ENCODE measurements at regions of chr16 and their contacts with region 1.

Region 1: GRCh38 chr16:82603784-82604411 is 22.9 kb upstream of the CDH13 start:
- DNase-seq: peak; percentile 64
- H3K4me3 Mint-ChIP-seq: no peak overlapping the region
- H3K27ac Mint-ChIP-seq: no peak overlapping the region
- H3K4me1 Mint-ChIP-seq: no peaks in the 10 kb centered on the region
- H3K27me3 Mint-ChIP-seq: no peaks in the 10 kb centered on the region
- CTCF ChIP-seq: peak; percentile 59

Region 2: DNA sequence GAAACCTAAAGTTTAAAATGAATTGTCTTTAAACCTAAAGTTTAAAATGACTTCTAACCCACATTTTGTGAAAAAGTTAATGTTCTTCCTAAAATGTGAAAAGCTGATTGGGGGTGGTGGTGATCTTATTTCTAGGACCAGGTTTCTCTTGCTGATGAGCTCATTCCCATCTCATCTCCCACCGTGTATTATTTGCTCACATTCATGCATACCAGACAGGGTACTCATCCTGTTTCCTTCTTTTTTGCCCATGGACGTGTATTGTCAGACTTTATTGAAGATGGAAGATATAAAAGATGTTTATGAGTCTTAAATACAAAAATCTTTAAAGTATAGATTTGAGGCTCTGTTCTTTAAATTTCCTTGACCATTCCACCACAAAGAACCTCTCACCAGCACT is 363.8 kb before region 1 on chr16:
- CTCF ChIA-PET with region 1: no interaction called
- POLR2A ChIA-PET with region 1: no interaction called
- intact Hi-C with region 1: no loop called
- DNase-seq: no peak
- H3K4me3 Mint-ChIP-seq: no peak overlapping the region
- H3K27ac Mint-ChIP-seq: no peak overlapping the region
- H3K4me1 Mint-ChIP-seq: no peaks in the 10 kb centered on the region
- H3K27me3 Mint-ChIP-seq: peaks cover 76% of the 10 kb centered on the region
- CTCF ChIP-seq: no peak

Region 3: DNA sequence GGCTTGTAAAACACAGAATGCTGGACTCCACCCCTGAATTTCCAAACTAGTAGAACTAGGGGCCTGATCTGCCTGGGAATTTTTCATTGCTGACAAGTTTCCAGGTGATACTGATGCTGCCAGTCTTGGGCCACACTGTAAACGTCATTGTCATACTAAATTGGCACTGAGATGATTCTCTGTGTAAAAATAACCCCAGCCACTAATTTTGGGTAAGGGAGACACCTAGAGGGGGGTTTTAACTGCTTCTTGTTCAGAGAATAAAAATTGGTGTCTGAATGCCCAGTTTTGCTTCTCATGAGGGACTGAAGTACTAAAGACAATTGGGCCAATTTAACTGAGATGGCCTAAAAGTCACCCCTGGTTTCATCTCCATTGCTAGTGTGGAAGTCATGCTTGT is 17.9 kb after region 1 on chr16:
- CTCF ChIA-PET with region 1: interaction called, 31 read pairs
- POLR2A ChIA-PET with region 1: no interaction called
- intact Hi-C with region 1: no loop called
- DNase-seq: peak; percentile 25
- H3K4me3 Mint-ChIP-seq: no peak overlapping the region
- H3K27ac Mint-ChIP-seq: no peak overlapping the region
- H3K4me1 Mint-ChIP-seq: no peaks in the 10 kb centered on the region
- H3K27me3 Mint-ChIP-seq: no peaks in the 10 kb centered on the region
- CTCF ChIP-seq: no peak

Region 4: DNA sequence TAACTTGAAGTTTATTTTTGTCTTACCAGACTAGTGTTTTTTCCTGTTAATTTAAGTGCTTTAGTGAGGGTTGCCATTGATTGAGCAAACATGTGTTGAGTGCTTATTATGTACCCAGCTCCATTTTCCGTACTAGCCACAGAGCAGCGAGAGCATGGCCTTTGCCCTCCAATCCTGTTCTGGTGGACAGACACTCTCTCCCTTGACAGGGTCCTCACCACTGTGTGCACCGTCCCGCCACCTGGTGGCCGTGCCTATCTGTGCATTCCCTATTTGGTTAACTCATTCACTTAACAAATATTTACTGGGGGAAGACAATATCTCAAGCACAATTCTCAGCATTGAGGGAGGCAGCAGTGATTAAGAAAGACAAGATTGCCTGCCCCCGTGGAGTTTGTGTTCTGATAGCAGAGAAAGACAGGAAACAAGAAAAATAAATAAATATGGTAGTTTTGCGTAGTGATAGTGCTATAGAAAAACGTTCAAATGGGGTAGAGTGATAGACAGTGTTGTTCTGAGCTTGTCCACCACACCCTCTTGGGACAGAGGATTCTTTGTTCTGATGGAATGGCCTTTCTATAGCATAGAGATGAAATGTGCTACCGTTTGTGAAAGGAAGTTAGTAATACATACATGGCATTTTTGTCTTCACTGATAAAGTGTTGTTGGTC is 35.9 kb after region 1 on chr16:
- CTCF ChIA-PET with region 1: interaction called, 35 read pairs
- POLR2A ChIA-PET with region 1: interaction called, 3 read pairs
- intact Hi-C with region 1: loop called (anchors 1 kb)
- DNase-seq: peak; percentile 73
- H3K4me3 Mint-ChIP-seq: no peak overlapping the region
- H3K27ac Mint-ChIP-seq: no peak overlapping the region
- H3K4me1 Mint-ChIP-seq: peaks cover 36% of the 10 kb centered on the region
- H3K27me3 Mint-ChIP-seq: no peaks in the 10 kb centered on the region
- CTCF ChIP-seq: peak; percentile 82

Region 5: DNA sequence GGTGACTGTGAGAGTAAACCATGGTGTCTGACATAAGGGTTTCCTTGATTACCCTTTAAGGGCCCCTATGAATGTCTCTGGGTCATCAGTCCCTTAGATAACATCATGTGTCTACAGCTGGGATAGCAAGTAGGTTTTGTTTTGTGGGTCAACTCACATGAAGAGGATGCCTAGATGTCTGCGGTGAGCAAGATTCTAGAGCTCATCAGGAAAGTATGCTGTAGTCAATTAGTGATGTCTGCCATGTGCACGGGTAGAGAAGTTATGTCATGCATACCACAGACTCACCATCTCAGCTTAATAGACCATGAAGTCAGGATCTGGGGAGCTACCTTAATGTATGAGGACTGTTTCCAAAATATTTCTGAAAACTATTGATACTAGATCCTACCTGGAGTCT is 80.4 kb after region 1 on chr16:
- CTCF ChIA-PET with region 1: no interaction called
- POLR2A ChIA-PET with region 1: no interaction called
- intact Hi-C with region 1: no loop called
- DNase-seq: no peak
- H3K4me3 Mint-ChIP-seq: no peak overlapping the region
- H3K27ac Mint-ChIP-seq: no peak overlapping the region
- H3K4me1 Mint-ChIP-seq: no peaks in the 10 kb centered on the region
- H3K27me3 Mint-ChIP-seq: no peaks in the 10 kb centered on the region
- CTCF ChIP-seq: no peak